Aorta (tissue), 5 donors: ENCODE measurements at regions of chr10 and their contacts with region 1.

Region 1: GRCh38 chr10:20415684-20416083 is 481.4 kb downstream of the NEBL start:
- DNase-seq: no peak
- ATAC-seq: no peak
- H3K4me3 ChIP-seq: no peak overlapping the region
- H3K27ac ChIP-seq: no peak overlapping the region
- H3K4me1 ChIP-seq: peaks cover 0 to 2% of the 10 kb centered on the region in 2 donors
- H3K27me3 ChIP-seq: no peaks in the 10 kb centered on the region

Region 2: DNA sequence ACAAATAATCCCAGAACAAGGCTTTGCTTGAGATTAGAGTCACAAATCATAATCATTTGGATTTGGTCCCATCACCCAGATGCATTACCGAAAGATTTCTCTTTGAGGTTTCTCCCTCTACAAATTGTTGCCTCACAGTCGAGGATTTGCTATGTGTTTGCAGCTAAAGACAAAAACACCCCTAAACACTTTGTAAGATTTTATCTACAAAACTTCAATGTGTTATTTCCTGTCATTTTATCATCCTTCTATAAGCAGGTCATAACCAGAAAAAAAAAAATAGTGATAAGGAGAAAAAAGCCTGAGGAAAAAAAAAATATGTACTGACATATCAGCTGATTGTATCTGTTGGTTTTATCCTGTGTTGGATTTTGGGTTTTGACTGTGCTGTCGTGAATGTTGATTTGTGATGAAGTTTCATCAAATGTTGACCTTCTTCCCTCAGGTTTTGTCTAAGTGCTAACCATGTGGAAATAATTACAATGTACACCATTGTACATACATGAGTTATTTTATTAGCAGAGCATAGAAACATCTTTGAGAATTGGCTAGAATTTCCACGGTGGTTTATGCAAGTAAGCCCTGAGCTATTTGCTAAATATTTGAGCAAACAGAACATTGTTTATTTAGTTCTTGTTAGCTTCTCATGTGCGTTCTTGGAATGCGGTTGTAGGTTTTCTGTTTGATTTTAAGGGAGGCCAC is 207.0 kb after region 1 on chr10:
- intact Hi-C with region 1: loop called in 1 of 2 experiments (anchors 10 kb)
- DNase-seq: no peak
- ATAC-seq: no peak
- H3K4me3 ChIP-seq: no peak overlapping the region
- H3K27ac ChIP-seq: peak overlapping the region in 1 of 2 donors; percentile 14
- H3K4me1 ChIP-seq: peaks cover 0 to 2% of the 10 kb centered on the region in 2 donors
- H3K27me3 ChIP-seq: no peaks in the 10 kb centered on the region